Ascending aorta (tissue), 2 donors: ENCODE measurements at regions of chr4 and their contacts with region 1.

Region 1: GRCh38 chr4:53541577-53542206 is 49.6 kb downstream of the LNX1 start:
- DNase-seq: no peak
- H3K4me3 ChIP-seq: peak overlapping the region in 1 of 2 donors; percentile 29
- H3K27ac ChIP-seq: peak overlapping the region; percentile 75 to 78
- H3K4me1 ChIP-seq: peaks cover 0 to 18% of the 10 kb centered on the region in 2 donors
- H3K27me3 ChIP-seq: no peaks in the 10 kb centered on the region
- CTCF ChIP-seq: no peak

Region 2: DNA sequence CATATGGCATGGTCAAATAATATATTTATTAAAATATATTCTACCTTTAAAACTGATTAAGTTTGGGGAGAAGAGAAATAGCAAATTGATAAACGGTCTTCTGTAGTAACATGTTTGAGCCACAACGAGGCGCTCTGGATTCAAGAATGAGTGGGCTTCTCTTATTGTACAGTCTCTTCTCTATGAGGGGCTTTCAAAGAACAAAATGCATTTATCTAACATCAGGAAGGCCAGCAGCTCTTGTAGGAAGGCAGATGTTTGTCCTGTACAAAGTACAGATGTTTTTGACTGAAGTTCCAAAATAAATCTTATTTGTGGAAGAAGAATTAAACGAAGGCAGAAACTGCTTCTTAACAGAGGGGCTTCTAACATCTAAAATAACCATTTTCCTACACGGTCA is 526.0 kb before region 1 on chr4:
- intact Hi-C with region 1: loop called (anchors 10 kb)
- DNase-seq: no peak
- H3K4me3 ChIP-seq: no peak overlapping the region
- H3K27ac ChIP-seq: peak overlapping the region in 1 of 2 donors; percentile 27
- H3K4me1 ChIP-seq: peaks cover 0 to 54% of the 10 kb centered on the region in 2 donors
- H3K27me3 ChIP-seq: no peaks in the 10 kb centered on the region
- CTCF ChIP-seq: peak; percentile 57 to 78 (median 76)

Region 3: DNA sequence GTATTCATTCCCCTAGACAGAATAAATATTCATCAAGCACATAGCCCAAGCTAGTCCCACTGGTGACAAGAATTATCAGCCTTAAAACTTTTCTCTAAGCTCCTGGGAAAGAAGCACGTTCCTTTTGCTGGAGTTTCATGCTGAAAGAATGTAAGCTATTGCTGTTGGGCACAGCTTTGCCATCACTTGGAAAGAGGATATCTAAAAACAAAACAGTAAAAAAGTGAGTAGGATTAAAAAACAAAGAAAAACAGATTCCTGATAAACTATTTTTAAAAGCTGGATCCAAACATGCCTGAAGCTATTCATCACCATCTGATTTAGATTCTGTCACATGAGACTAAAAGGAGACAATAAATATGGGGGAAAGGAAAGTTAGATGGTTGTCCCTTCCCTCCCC is 352.7 kb before region 1 on chr4:
- intact Hi-C with region 1: loop called (anchors 5 kb)
- DNase-seq: no peak
- H3K4me3 ChIP-seq: no peak overlapping the region
- H3K27ac ChIP-seq: peak overlapping the region; percentile 35 to 74
- H3K4me1 ChIP-seq: peaks cover 9 to 19% of the 10 kb centered on the region in 2 donors
- H3K27me3 ChIP-seq: no peaks in the 10 kb centered on the region
- CTCF ChIP-seq: no peak

Region 4: GRCh38 chr4:53377319-53378170 is 164.1 kb before region 1 on chr4 and contains the start of gene FIP1L1:
- intact Hi-C with region 1: loop called (anchors 10 kb)
- DNase-seq: peak; percentile 78 to 97
- H3K4me3 ChIP-seq: peak within 1 kb of the TSS; percentile 66 to 78
- H3K27ac ChIP-seq: peak within 1 kb of the TSS; percentile 82 to 84
- H3K4me1 ChIP-seq: peaks cover 2 to 3% of the 10 kb centered on the region in 2 donors
- H3K27me3 ChIP-seq: no peaks in the 10 kb centered on the region
- CTCF ChIP-seq: no peak
- total RNA-seq, gene FIP1L1: 20.4 TPM

Region 5: DNA sequence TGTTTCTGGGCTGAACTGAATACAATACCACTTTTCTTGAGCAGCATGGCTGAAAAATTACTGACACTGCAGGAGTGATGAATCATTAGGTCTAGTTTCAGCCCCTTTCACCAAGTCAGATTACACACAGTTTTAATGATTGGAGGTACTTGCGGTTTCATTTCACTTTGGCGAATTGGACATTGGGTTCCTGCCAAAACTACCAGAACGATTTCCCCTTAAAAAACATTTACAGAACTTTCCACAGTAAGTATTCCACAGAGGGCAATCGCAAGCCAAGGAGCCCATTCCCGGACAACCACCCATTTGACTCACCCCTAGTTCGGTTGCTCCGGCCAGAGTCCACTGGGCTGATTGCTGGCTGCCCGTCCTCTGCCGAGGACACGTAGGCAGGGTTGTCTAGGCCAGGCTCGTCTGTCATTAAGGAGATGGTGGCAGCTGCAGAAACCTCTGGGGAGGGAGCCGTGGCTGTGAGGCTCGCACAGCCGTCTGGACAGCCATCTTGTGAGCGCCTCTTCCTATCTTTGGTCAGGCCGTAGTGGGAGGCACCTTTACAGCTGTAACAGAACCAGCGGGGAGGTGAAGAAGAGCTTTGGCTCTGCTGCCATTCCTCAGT is 33.9 kb before region 1 on chr4:
- intact Hi-C with region 1: loop called (anchors 2 kb)
- DNase-seq: peak; percentile 35 to 90
- H3K4me3 ChIP-seq: peak overlapping the region; percentile 21 to 53
- H3K27ac ChIP-seq: peak overlapping the region; percentile 76 to 85
- H3K4me1 ChIP-seq: peaks cover 0 to 10% of the 10 kb centered on the region in 2 donors
- H3K27me3 ChIP-seq: no peaks in the 10 kb centered on the region
- CTCF ChIP-seq: no peak

Region 6: GRCh38 chr4:53558065-53558801 is 16.5 kb after region 1 on chr4:
- intact Hi-C with region 1: loop called (anchors 2 kb)
- DNase-seq: peak in 1 of 2 donors; percentile 79
- H3K4me3 ChIP-seq: peak overlapping the region; percentile 11 to 59
- H3K27ac ChIP-seq: peak overlapping the region; percentile 81 to 85
- H3K4me1 ChIP-seq: peaks cover 0 to 7% of the 10 kb centered on the region in 2 donors
- H3K27me3 ChIP-seq: no peaks in the 10 kb centered on the region
- CTCF ChIP-seq: no peak